ENCODE measurements at regions of chr2 and their contacts with region 1.

Region 1: DNA sequence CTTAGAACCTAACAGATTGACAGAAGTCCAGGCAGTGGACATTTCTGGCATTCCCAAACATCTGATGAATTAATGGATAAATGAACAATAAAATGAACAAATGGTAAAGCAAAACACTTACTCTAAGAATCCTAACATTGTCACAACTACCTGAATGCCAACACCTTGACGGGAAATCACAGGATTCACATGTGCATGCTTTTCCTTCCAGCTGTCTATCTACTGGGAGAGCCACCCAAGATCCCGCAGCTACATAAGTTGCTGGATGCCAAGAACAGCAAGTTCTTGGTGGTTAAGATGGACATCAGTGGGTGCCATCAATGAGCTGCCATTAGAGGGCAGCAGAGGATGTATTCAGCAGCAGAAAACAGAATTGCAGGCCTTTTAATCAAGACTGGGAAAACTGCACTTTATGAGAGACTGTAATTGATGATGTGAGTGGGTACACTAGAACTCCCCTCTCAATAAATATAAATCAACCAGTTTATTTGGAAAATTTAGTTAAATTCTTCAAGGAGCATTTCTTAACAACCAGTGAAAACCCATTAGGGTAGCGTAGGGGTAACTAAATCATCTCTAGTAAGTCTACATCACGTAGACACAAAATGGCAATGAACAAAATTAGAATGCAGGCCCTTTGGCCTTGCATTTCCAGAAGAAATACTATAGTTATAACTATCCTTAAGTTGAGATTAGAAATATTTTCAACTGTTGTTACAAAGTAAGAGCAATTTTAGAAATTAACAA is 45.6 kb downstream of the SESTD1 start:
- DNase-seq: peak; percentile 21
- H3K4me3 Mint-ChIP-seq: no peak overlapping the region
- H3K27ac Mint-ChIP-seq: no peak overlapping the region
- H3K4me1 Mint-ChIP-seq: no peaks in the 10 kb centered on the region
- H3K27me3 Mint-ChIP-seq: no peaks in the 10 kb centered on the region

Region 2: DNA sequence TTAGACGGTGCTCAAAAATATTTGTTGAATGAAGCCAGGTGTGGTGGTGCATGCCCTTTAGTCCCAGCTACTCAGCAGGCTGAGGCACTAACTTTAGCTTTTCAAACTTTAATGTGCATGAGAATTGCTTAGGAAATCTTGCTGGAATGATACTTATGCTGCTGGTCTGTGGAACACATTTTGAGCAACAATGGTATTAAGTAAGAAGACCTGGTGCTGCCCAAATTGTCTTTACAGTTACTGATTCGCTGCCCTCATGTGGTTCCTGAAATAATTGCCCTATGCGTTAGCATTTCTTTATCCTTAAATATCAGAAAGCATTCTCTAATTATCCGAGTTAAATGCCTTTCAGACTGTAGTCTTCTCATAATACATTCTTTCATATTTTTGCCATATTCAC is 121.6 kb after region 1 on chr2:
- intact Hi-C with region 1: loop called (anchors 1 kb)
- DNase-seq: no peak
- H3K4me3 Mint-ChIP-seq: no peak overlapping the region
- H3K27ac Mint-ChIP-seq: no peak overlapping the region
- H3K4me1 Mint-ChIP-seq: no peaks in the 10 kb centered on the region
- H3K27me3 Mint-ChIP-seq: peaks cover 2% of the 10 kb centered on the region

Region 3: DNA sequence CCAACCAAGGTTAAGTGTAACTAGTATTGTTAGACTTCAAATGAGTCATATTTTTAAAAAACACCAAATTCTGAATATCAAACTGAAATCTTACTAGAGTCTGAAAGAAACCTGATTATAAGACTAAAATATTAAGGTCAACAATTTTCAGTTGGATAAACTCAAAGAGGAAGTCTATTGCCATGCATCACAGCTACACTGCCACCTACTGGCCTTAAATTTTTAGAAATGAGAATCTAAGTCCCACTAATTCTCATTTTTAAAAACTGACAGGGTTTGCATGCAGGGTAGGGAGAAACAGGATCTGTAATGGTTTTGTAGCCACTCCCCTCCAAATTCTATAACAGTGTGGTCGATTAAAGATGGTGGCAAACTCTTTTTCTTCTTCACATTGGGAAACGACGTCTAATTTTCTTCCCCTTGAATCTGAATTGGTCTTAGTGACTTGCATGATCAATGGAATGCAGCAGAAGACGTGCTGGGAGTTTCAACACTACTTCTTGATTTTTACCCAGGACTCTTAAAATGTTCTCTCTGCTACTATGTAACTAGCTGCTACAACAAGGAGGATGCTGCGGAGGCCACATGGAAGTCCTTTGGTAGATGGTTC is 221.7 kb after region 1 on chr2:
- intact Hi-C with region 1: loop called (anchors 1 kb)
- DNase-seq: no peak
- H3K4me3 Mint-ChIP-seq: no peak overlapping the region
- H3K27ac Mint-ChIP-seq: no peak overlapping the region
- H3K4me1 Mint-ChIP-seq: no peaks in the 10 kb centered on the region
- H3K27me3 Mint-ChIP-seq: peaks cover 15% of the 10 kb centered on the region

Measured in activated T-helper 1 cell treated with anti-CD3 and anti-CD28 coated beads, Interleukin-12 subunit alpha, Interleukin-12 subunit beta, Interleukin-2, Interleukin-4 antibody, amounts not matched to agents 30 ng/mL and 10 ng/mL and 1 ng/mL, durations not matched to agents 14 hours and 24 hours and 36 hours (primary cell).